ENCODE measurements at regions of chr1 and their contacts with region 1.

Region 1: DNA sequence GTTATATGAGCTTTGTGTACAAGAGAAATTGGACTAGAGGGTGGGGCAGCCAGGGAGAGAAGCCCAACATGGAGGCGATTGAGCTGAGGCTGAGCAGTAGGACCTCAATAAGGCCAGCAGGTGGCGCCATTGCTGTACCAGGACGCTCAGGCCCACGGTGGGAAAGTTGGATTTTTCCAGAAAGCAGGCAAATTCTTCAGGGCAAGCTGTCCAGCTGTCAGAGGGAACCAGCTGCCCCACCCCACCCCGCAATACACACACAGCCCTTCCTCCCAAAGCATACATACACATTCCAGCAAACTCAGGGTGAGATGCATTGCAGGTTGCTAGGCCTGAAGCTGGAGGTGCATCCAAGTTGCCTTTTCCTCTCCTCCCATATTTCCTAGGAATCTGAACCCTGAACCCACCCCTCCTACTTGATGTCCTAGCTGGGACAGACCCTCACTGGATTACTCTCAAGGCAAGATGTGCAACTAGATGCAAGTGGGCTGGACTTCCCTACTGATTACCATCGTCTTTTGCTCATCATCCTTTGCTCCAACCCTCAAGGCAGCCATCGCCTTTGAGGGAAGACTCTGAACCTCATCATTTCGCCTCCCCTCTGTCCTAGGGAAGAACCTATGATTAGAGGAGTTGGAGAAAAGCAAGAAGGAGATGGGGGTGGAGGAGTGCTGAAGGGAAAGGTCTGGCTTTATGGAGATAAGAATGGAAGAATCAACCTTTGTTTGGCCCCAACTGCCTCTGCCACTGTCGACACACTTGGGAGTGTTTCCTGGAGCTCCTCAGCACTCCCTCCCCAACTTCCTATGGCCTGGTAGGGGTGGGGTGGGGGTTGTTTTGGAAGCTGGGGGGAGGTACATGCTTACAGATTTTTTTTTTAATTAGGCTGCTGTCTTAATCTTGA is 25.5 kb downstream of the CD34 start:
- H3K4me3 ChIP-seq: no peak overlapping the region
- H3K27ac ChIP-seq: no peak overlapping the region
- H3K4me1 ChIP-seq: no peaks in the 10 kb centered on the region
- CTCF ChIP-seq: peak; percentile 80

Region 2: GRCh38 chr1:207868774-207869721 is 16.3 kb before region 1 on chr1:
- CTCF ChIA-PET with region 1: interaction called, 146 read pairs
- POLR2A ChIA-PET with region 1: interaction called, 5 read pairs
- H3K4me3 ChIP-seq: peak overlapping the region; percentile 71
- H3K27ac ChIP-seq: peak overlapping the region; percentile 74; the same call in 1 of the 2 replicates
- H3K4me1 ChIP-seq: 0 out of 2 replicates have a peak, but pooled peaks cover 2% of the 10 kb centered on the region
- CTCF ChIP-seq: 0 out of 2 replicates have a peak, but pooled peaks have one; percentile 11

Region 3: DNA sequence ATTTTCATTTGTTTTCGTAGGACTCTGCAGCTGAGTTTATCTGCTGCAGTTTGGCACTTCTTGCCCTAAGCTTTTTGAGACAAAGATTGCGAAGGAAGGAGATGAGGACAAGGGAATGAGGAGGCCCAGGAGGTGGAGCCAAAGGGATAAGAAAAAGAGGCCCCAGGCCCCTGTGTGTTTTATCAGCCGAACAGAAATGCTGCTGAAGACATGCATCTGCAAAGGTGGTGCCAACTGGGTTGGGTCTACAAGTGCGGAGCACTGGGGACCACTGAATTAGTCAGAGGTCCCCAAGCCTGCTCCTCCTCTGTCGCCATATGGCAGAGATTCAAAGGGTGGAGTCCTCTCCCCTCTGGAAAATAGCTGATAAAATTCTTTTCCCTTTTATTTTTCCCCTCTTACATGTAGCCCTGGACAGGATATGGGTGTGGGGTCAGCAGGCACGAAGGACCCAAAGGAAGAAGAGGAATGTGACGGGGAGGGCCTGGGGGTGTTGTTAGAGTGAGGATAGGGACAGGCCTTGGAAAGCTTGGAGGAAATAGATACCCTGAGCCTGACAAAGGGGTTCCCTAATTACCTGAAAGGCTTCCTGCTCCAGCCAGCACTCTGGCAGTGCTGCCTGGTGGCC is 22.8 kb after region 1 on chr1:
- CTCF ChIA-PET with region 1: interaction called, 26 read pairs
- POLR2A ChIA-PET with region 1: no interaction called
- H3K4me3 ChIP-seq: no peak overlapping the region
- H3K27ac ChIP-seq: no peak overlapping the region
- H3K4me1 ChIP-seq: no peaks in the 10 kb centered on the region
- CTCF ChIP-seq: no peak

Region 4: DNA sequence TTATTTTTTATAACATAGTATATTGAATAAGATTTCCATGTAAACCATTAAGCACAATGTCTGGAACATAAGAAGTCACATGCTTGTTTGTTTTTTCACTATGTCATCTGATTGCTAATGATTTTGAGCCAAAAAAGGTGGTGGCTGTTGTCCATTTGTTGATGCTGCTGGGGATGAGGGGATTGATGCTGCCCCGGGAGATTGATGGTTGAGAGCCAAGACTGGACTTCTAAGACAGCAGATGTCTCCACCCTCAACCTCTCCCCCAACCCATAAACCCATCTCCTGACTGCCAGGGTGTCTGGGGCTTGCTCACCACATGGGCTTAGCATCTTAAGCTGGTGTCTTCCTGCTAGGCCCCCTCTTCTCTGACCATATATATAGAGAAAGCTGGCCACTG is 61.4 kb after region 1 on chr1:
- CTCF ChIA-PET with region 1: interaction called, 12 read pairs
- POLR2A ChIA-PET with region 1: no interaction called
- H3K4me3 ChIP-seq: no peak overlapping the region
- H3K27ac ChIP-seq: no peak overlapping the region
- H3K4me1 ChIP-seq: no peaks in the 10 kb centered on the region
- CTCF ChIP-seq: no peak

Region 5: DNA sequence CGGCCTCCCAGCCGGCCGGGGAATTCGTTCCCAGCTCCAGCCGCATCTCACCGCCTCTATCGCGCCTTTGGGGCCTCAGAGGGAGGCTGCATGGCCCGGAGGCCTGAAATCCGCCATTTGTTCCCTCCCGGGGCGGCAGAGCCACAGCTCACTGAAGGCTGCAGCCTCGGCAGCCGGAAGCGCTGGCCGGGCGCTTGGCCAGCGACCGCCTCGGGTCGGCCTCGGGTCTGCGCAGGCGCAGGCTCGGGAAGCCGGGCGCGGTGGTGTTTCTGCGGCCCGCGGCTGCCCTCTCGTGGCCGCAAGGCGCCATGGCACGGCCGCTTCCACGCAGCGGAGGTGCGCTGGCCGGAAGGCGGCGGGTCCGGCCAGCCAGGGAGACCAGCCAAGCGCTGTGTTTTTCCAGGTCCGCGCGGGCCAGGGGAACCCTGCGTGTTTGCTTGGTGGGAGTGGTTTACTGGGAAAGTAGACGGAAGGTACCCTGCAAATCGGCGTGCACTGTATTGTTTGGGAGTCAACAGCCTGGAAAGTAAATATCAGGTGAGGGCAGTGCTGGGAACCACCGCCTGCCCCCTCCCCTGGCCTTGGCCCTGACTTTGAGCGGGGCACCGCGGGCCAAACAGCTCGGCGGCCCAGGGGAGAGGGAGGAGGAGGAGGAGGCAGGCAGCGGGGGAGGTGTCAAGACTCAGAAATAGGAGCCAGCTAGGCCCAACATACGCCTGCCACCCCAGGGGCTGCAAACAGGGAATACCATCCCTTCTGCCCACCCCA is 78.2 kb after region 1 on chr1:
- CTCF ChIA-PET with region 1: interaction called, 144 read pairs
- POLR2A ChIA-PET with region 1: interaction called, 8 read pairs
- H3K4me3 ChIP-seq: peak overlapping the region; percentile 37
- H3K27ac ChIP-seq: no peak overlapping the region; the same call in 1 of the 2 replicates
- H3K4me1 ChIP-seq: no peaks in the 10 kb centered on the region
- CTCF ChIP-seq: peak; percentile 95

Region 6: DNA sequence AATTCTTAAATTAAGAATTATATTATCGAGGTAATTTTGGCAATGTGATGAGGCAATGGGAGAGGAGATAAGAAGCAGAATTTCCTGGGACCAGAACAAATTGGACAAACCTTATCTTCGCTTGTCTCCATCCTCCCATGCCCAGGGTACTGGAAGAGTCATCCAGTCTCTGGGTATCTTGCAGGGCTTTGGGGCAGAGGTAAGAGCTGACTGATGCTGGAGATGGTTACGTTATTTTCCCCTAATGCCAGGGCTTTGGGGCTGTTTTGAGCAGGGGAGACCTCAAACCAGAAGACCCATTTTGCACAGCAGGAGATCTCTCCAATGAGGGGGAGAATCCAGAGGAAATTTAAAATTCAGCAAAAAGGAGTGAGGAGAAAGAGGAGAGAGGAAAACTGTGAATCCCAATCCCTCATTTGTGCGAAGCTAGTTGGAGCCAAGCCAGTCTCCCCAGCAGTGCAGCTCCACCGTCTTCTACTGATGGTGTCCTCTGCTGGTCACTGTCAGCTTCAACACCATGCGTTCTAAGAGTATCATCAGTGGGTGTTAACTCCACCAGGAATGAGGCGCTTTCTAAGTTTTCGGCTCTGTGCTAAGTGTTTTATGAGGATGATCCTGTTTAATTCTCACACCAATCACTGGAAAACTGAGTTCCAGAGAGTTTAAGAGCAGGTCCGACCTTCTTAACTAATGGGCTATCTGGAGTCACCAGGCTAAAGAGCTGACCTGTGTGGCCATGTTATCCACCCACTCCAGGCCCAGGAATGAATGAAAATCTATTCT is 112.3 kb after region 1 on chr1:
- CTCF ChIA-PET with region 1: interaction called, 37 read pairs
- POLR2A ChIA-PET with region 1: no interaction called
- H3K4me3 ChIP-seq: no peak overlapping the region
- H3K27ac ChIP-seq: no peak overlapping the region
- H3K4me1 ChIP-seq: no peaks in the 10 kb centered on the region
- CTCF ChIP-seq: peak; percentile 65

Measured in HEK293 (cell line).